ENCODE measurements at regions of chr6 and their contacts with region 1.

Region 1: DNA sequence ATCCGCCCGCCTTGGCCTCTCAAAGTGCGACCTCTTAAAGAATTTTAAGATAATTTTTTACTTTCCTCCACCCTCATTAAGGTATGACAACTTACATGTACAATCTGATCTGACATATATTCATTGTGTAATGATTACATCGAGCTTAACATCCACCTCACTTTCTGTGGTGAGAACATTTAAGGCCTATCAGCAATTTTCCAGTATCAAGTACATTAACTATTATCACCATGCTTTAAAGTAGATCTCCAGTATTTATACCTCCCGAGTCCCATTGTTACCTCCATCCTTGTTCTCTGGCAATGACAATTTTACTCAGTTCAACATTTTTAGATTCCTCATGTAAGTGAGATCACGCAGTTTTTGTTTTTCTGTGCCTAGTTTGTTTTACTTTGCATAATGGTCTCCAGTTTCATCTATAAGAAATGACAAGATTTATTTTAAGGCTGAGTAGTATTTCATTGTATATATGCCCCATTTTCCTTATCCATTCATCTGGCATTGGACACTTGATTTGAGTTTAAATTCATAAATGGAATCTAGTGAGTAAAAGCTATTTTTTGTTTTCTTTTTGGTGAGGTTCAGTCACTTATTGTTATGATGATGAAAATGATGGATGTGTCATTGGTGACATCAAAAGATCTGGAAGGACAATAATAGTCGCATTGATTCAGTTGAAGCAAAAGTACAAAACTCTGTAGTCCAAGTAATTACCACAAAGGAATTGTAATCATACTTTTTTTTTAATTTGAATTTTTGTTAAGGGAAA is 87.0 kb downstream of the OR2B2 start:
- DNase-seq: peak in 1 of 10 donors; percentile 40
- ATAC-seq: no peak
- H3K4me3 Mint-ChIP-seq: peak overlapping the region; percentile 83 to 99 (median 92)
- H3K27ac Mint-ChIP-seq: peak overlapping the region; percentile 96 to 100 (median 97)
- H3K4me1 Mint-ChIP-seq: peaks cover 8 to 43% (median 31%) of the 10 kb centered on the region in 4 donors
- H3K27me3 Mint-ChIP-seq: no peaks in the 10 kb centered on the region

Region 2: GRCh38 chr6:27864906-27865849 is 40.0 kb after region 1 on chr6:
- POLR2A ChIA-PET with region 1: interaction called, 793 read pairs
- DNase-seq: peak; percentile 43 to 91 (median 80)
- ATAC-seq: peak; percentile 81
- H3K4me3 Mint-ChIP-seq: peak overlapping the region; percentile 87 to 99 (median 98)
- H3K27ac Mint-ChIP-seq: peak overlapping the region; percentile 87 to 99 (median 96)
- H3K4me1 Mint-ChIP-seq: peaks cover 15 to 45% (median 39%) of the 10 kb centered on the region in 4 donors
- H3K27me3 Mint-ChIP-seq: no peaks in the 10 kb centered on the region

Region 3: DNA sequence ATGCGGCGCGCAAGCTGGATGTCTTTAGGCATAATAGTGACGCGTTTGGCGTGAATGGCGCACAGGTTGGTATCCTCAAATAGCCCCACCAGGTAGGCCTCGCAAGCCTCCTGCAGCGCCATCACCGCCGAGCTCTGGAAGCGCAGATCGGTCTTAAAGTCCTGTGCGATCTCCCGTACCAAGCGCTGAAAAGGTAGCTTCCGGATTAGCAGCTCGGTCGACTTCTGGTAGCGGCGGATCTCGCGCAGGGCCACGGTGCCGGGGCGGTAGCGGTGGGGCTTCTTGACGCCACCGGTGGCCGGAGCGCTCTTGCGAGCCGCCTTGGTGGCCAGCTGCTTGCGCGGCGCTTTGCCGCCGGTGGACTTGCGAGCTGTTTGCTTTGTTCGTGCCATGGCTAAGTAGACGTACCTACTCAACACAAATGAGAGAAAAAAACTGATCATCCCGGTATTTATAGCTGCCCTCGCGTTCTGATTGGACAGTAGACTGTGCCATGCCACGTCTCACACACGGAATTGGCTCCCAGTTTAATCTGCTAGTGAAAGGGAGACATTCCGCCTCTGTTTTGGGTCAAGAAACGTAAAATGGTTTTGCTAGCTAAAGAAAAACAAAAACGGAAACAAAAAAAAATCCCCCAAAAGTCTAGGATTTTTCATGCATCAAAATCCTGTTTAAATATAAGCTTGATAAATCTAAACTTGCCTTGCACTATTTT is 46.9 kb after region 1 on chr6:
- POLR2A ChIA-PET with region 1: interaction called, 793 read pairs
- DNase-seq: peak; percentile 57 to 99 (median 91)
- ATAC-seq: peak; percentile 78 to 79
- H3K4me3 Mint-ChIP-seq: peak overlapping the region; percentile 86 to 95 (median 92)
- H3K27ac Mint-ChIP-seq: peak overlapping the region; percentile 89 to 99 (median 96)
- H3K4me1 Mint-ChIP-seq: peaks cover 21 to 46% (median 38%) of the 10 kb centered on the region in 4 donors
- H3K27me3 Mint-ChIP-seq: no peaks in the 10 kb centered on the region